Tibial artery (tissue), 4 donors: ENCODE measurements at regions of chr1 and their contacts with region 1.

Region 1: DNA sequence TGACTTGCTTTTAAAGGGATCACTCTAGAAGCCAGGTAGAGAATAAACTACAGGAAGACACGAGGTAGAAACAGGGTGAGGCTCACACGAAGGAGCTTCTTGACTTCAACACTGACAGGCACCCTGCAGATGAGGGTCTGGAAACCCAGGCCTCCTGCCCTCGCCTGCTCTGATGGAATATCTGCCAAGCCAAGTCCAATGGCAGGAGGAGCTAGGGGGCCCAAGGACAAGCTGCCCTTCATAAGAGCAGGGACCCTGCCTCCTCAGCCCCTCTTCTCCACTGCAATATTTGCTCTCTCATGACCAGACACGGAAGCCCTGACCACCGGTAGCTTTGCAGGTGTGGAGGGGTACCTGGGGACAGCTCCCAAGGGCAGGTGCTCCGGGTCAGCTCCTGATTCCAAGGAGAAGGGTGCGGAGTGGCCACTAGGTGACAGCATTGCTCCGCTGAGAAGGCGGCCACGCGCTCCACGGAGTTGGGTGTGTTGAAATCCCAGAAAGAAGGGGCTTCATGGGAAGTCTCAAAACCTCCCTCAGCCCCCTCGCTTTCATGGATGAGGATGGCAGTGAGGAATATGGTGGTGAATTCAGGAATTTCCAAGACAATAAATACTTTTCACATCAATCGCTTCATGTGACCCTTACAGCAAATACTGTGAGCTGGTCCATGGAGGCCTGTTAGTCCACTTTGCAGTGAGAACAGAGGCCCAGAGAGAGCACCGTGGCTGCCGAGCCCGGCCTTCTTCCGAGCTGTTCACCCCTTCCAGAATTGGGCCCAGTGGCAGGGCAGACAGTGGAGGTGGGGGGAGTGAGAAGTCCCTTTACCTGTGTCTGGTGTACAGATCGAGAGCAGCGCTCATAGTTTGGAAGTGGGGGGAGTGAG is 33.2 kb upstream of the PAX7 start:
- DNase-seq: peak in 1 of 2 donors; percentile 38
- H3K4me3 ChIP-seq: no peak overlapping the region
- H3K27ac ChIP-seq: no peak overlapping the region
- H3K4me1 ChIP-seq: peaks cover 0 to 5% (median 0%) of the 10 kb centered on the region in 4 donors
- H3K27me3 ChIP-seq: peaks cover 0 to 74% of the 10 kb centered on the region in 2 donors
- CTCF ChIP-seq: peak; percentile 80 to 86

Region 2: DNA sequence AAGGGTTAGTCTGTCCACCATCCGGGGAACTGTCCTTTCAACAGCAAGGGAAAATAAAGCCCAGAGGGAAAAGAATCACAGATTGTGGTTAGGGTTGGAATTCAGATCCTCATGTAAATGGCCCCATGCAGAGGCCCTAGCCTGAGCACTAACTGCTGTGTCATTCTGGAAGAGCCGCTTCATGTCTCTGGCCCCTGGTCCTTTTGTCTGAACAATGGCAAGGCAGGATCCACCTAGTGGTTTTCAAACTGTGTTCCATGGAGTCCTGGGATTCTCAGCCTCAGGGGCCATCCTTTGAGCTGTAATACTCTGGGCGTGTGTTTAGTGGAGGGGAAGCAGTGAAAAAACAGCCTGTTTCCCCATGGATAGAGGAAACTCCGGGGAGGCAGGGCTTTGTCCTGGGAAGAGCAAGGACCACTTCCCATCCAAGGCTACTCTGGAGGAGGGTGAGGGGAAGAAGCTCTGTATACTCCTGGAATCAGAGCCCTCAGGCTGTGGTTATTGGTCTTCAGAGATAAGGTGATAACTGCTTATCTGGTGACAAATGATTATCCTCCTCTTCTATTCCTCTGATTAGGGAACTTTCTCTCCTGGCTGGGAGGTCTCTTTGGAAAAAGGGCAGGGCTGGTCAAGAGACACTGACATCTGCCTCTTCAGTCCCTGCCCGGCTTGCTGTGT is 52.4 kb after region 1 on chr1:
- intact Hi-C with region 1: no loop called
- DNase-seq: no peak
- H3K4me3 ChIP-seq: no peak overlapping the region
- H3K27ac ChIP-seq: no peak overlapping the region
- H3K4me1 ChIP-seq: peaks cover 0 to 15% (median 13%) of the 10 kb centered on the region in 4 donors
- H3K27me3 ChIP-seq: peaks cover 0 to 98% of the 10 kb centered on the region in 2 donors
- CTCF ChIP-seq: no peak

Region 3: DNA sequence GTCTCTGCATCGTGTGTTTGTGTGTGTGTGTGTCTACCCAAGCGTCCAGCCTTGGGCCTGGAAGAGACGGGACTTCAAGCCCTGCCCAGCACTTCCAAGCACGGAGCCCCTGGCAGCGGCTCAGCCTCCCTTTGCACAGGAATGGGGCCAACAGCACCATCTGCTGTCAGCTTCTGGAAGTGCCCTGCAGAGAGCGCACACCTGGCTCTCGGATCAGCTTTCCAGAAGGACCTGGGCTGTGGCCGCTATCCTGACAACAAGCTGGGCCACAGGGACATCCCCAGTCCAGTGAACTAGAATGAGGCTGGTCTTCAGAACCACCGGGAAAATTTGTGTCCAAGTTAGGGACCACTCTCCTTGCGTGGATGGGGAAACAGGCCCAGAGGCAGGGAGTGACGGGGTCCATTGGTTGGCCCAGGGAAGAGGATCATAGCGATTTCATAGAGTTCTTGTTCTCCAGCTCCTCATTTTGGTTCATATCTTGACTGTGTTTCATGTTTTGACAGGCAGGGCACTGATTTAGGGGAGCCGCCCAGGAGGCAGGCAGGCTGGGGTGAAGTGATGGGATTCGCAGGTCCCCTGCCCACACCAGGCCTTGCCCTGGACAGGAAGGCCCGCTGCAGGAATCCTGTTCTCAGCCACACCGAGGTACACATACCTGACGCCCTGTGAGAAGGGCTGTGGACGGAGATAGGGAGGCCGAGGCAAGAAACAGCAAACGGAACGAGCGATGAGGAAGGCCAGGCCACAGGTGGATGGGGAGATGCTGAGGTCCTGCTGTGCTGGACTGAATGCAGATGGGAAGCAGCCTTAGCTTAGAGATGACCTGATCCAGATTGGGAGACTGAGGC is 223.6 kb after region 1 on chr1:
- intact Hi-C with region 1: loop called (anchors 10 kb)
- DNase-seq: peak; percentile 58 to 74
- H3K4me3 ChIP-seq: no peak overlapping the region
- H3K27ac ChIP-seq: no peak overlapping the region
- H3K4me1 ChIP-seq: peaks cover 0 to 3% (median 0%) of the 10 kb centered on the region in 4 donors
- H3K27me3 ChIP-seq: peaks cover 0 to 58% of the 10 kb centered on the region in 2 donors
- CTCF ChIP-seq: peak; percentile 66 to 80

Region 4: DNA sequence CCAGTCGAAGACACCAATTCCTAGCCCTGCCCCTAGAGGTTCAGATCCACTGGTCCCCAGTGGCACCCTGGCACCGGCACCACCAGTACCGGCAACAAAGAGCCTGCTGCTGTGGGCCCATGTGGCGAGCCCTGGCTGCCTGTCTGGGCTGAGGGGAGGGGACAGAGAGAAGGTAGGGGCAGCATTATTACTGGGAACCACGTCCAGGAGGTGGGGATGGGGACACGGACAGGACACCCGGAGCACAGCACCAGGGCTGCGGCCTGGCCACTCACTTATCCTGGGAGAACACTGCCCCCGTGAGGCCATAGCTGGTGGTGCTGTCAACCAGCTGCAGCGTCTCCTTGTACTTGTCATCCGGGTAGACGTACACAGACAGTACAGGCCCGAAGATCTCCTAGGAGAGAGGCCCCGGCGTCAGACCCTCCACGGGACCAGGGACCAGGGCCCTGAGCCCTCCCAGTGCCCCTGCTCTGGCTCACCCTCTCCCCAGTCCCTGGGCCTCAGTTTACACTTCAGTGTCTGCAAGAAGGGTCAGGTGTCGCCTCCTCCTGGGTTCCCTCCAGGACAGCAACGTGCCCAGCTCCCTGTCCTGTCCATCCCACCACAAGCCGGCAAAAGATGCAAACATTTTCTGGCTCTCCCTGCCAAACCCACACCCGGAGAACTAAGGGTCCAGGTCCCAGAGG is 277.9 kb after region 1 on chr1:
- intact Hi-C with region 1: loop called (anchors 10 kb)
- DNase-seq: peak; percentile 85
- H3K4me3 ChIP-seq: no peak overlapping the region
- H3K27ac ChIP-seq: no peak overlapping the region
- H3K4me1 ChIP-seq: no peaks in the 10 kb centered on the region
- H3K27me3 ChIP-seq: no peaks in the 10 kb centered on the region
- CTCF ChIP-seq: peak; percentile 67 to 83